Activated CD4-positive, alpha-beta memory T cell treated with anti-CD3 and anti-CD28 coated beads for 36 hours (primary cell): ENCODE measurements at regions of chr2 and their contacts with region 1.

Region 1: GRCh38 chr2:69601179-69601612 is 42.3 kb downstream of the AAK1 start:
- DNase-seq: no peak
- H3K4me3 Mint-ChIP-seq: no peak overlapping the region
- H3K27ac Mint-ChIP-seq: peak overlapping the region; percentile 85
- H3K4me1 Mint-ChIP-seq: peaks cover 88% of the 10 kb centered on the region
- H3K27me3 Mint-ChIP-seq: no peaks in the 10 kb centered on the region

Region 2: DNA sequence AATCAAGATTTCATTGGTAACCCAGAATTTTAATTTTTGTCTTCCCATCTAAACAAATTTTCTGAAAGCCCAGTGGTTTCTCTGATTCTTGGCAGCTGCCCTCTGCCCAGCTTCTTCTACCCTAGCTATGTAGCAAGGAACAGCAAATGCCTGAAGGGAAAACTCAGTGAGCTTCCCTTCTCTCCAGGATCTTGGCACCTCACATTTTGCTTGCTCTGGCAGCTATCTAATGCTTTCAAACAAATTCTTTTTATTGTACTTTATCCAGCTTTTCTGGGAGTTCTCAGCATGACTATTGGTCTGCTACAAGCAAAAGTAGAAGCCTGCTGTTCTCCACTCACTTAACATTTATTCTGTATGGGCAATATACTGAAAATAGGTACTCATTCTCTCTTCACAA is 195.9 kb before region 1 on chr2:
- CTCF ChIA-PET with region 1: no interaction called
- POLR2A ChIA-PET with region 1: no interaction called
- intact Hi-C with region 1: no loop called
- DNase-seq: no peak
- H3K4me3 Mint-ChIP-seq: no peak overlapping the region
- H3K27ac Mint-ChIP-seq: no peak overlapping the region
- H3K4me1 Mint-ChIP-seq: peaks cover 4% of the 10 kb centered on the region
- H3K27me3 Mint-ChIP-seq: no peaks in the 10 kb centered on the region

Region 3: DNA sequence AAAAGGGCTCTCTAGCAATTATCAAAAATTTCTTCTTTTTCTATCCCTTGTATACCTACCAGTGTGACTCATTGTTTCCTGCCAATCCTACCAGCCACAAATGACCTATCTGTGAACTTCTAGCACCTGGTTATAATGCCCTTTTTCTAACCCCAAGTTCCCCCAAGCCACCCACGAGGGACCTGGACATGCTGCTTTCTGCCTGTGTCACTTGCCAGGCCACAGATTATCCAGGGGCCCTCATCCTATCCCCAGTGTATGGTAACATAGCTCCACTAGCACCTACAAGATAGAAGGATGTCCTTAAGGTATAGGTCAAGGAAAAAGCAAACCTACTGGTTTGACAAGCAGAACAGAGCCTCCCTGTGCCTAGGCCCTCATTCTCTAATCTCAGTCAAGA is 15.6 kb after region 1 on chr2:
- CTCF ChIA-PET with region 1: interaction called, 5 read pairs
- POLR2A ChIA-PET with region 1: interaction called, 4 read pairs
- intact Hi-C with region 1: loop called (anchors 2 kb)
- DNase-seq: peak; percentile 67
- H3K4me3 Mint-ChIP-seq: peak overlapping the region; percentile 7
- H3K27ac Mint-ChIP-seq: peak overlapping the region; percentile 38
- H3K4me1 Mint-ChIP-seq: peaks cover 40% of the 10 kb centered on the region
- H3K27me3 Mint-ChIP-seq: no peaks in the 10 kb centered on the region